Natural killer cell (primary cell): ENCODE measurements at regions of chr17 and their contacts with region 1.

Region 1: GRCh38 chr17:17119533-17119932 is 77.3 kb downstream of the MPRIP start:
- DNase-seq: peak; percentile 43 to 80
- ATAC-seq: peak; percentile 78 to 87 (median 84)
- H3K4me3 ChIP-seq: no peak overlapping the region
- H3K4me3 Mint-ChIP-seq: peak overlapping the region; percentile 56
- H3K27ac ChIP-seq: peak overlapping the region; percentile 95
- H3K27ac Mint-ChIP-seq: peak overlapping the region; percentile 92 to 93
- H3K4me1 ChIP-seq: peaks cover 82% of the 10 kb centered on the region
- H3K4me1 Mint-ChIP-seq: peaks cover 81 to 86% of the 10 kb centered on the region in 2 donors
- H3K27me3 ChIP-seq: no peaks in the 10 kb centered on the region
- H3K27me3 Mint-ChIP-seq: no peaks in the 10 kb centered on the region
- CTCF ChIP-seq: no peak

Region 2: GRCh38 chr17:16987830-16988601 is 131.5 kb before region 1 on chr17:
- intact Hi-C with region 1: loop called (anchors 5 kb)
- DNase-seq: peak; percentile 57 to 70
- ATAC-seq: peak; percentile 86 to 90 (median 88)
- H3K4me3 ChIP-seq: no peak overlapping the region
- H3K4me3 Mint-ChIP-seq: peak overlapping the region; percentile 83
- H3K27ac ChIP-seq: peak overlapping the region; percentile 87
- H3K27ac Mint-ChIP-seq: peak overlapping the region; percentile 86 to 87
- H3K4me1 ChIP-seq: peaks cover 50% of the 10 kb centered on the region
- H3K4me1 Mint-ChIP-seq: peaks cover 20 to 49% of the 10 kb centered on the region in 2 donors
- H3K27me3 ChIP-seq: no peaks in the 10 kb centered on the region
- H3K27me3 Mint-ChIP-seq: no peaks in the 10 kb centered on the region
- CTCF ChIP-seq: no peak

Region 3: DNA sequence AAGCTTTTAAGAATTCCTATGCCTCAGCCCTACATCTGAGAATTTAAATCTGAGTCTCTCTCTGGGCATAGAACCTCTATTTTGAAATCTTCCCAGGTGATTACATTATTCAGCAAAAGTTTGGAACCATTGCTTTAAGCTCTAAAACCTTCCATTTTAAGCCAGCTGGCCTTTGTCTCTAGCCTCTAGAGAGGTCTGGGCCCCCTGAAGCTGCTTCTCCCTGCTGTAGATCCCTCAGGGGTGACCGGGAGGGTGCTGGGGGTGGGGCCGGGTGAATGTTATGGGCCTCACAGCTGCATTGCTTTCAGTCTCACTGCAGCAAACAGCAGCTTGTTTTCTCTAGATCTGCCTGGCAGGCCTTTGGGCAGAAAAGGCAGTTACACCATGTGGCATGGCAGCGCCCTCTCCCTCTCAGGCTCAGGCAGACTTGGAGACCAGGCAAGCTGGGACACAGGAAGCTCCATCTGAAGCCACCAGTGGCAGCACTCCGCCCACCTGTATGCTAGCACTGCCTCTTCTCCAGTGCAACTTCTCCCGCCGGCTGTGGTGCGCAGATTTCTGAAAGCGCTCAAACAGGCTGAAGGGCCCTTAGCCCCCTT is 11.0 kb before region 1 on chr17:
- intact Hi-C with region 1: loop called (anchors 1 kb)
- DNase-seq: no peak
- ATAC-seq: no peak
- H3K4me3 ChIP-seq: no peak overlapping the region
- H3K4me3 Mint-ChIP-seq: no peak overlapping the region
- H3K27ac ChIP-seq: peak overlapping the region; percentile 73
- H3K27ac Mint-ChIP-seq: peak overlapping the region; percentile 84 to 95
- H3K4me1 ChIP-seq: peaks cover 53% of the 10 kb centered on the region
- H3K4me1 Mint-ChIP-seq: peaks cover 47 to 76% of the 10 kb centered on the region in 2 donors
- H3K27me3 ChIP-seq: no peaks in the 10 kb centered on the region
- H3K27me3 Mint-ChIP-seq: no peaks in the 10 kb centered on the region
- CTCF ChIP-seq: no peak

Region 4: DNA sequence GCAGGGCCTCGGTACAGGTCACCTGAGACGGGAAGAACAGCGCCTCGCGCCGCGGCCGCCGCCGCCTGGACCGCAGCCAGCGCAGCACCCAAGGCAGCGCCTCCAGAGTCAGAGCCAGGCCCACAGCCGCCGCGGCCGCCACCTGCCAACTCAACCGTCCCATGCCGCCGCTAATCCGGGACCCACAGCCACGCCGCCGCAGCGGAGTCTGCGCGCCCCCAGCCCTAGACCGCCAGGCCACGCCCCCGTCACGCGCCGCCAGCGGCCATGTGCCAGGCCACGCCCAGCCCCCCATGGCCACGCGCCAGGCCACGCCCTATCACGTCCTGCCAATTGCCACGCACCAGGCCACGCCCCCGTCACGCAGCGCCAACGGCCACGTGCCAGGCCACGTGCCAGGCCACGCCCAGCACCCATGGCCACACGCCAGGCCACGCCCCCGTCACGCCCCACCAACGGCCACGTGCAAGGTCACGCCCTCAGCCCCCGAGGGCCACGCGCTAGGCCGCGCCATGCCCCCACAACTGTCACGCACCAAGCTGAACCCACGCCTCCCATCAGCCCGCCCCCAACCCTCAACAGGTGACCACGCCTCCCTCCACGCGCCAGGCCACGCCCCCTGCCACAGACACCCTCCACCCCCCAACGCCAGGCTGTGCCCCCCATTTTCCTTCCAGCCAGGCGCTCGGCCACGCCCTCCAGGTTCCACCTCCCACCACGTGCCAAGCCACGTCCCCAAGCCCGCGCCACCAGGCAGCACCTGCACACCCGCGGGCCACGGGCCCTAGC is 86.8 kb after region 1 on chr17 and contains the start of gene PLD6:
- intact Hi-C with region 1: loop called (anchors 10 kb)
- DNase-seq: peak; percentile 75 to 96
- ATAC-seq: peak; percentile 67 to 84 (median 75)
- H3K4me3 ChIP-seq: peak within 1 kb of the TSS; percentile 53
- H3K4me3 Mint-ChIP-seq: peak within 1 kb of the TSS; percentile 80
- H3K27ac ChIP-seq: peak within 1 kb of the TSS; percentile 56
- H3K27ac Mint-ChIP-seq: peak within 1 kb of the TSS; percentile 61 to 87
- H3K4me1 ChIP-seq: peaks cover 43% of the 10 kb centered on the region
- H3K4me1 Mint-ChIP-seq: peaks cover 22 to 41% of the 10 kb centered on the region in 2 donors
- H3K27me3 ChIP-seq: no peaks in the 10 kb centered on the region
- H3K27me3 Mint-ChIP-seq: no peaks in the 10 kb centered on the region
- CTCF ChIP-seq: no peak
- total RNA-seq, gene PLD6: 0.45 to 1.7 (median 0.84) TPM